ENCODE measurements at regions of chr4 and their contacts with region 1.

Region 1: GRCh38 chr4:21790438-21791029 is 158.0 kb downstream of the KCNIP4 start:
- DNase-seq: peak; percentile 51
- H3K4me3 ChIP-seq: no peak overlapping the region
- H3K27ac ChIP-seq: no peak overlapping the region
- H3K4me1 ChIP-seq: no peaks in the 10 kb centered on the region
- H3K27me3 ChIP-seq: peaks cover 0 to 2% of the 10 kb centered on the region in 2 experiments
- CTCF ChIP-seq: peak; percentile 14 to 26
- POLR2A ChIP-seq: no peak

Region 2: DNA sequence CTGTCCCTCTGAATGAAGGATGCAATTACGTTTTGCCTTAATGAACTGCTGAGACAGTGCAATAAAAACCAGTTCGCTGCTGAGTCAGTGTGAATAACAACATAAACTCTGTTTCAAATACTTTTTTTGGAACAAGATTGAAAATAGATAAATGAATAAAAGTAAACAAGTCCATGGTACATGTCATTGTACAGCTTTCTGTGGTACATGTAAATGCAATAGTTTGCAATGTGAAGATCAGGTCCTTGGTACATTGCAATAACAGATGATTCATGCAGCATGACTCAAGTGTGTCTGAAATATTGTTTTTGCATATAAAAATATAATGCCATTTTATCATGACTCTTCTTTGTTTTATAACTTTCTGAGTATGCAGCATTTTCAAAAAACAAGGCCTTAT is 1283.7 kb before region 1 on chr4:
- CTCF ChIA-PET with region 1: no interaction called
- POLR2A ChIA-PET with region 1: no interaction called
- dilution Hi-C with region 1: no loop called
- intact Hi-C with region 1: no loop called
- DNase-seq: peak; percentile 83
- H3K4me3 ChIP-seq: no peak overlapping the region
- H3K27ac ChIP-seq: peak overlapping the region; percentile 28
- H3K4me1 ChIP-seq: peaks cover 20% of the 10 kb centered on the region
- H3K27me3 ChIP-seq: no peaks in the 10 kb centered on the region
- CTCF ChIP-seq: no peak
- POLR2A ChIP-seq: no peak

Region 3: GRCh38 chr4:21780158-21780557 is 10.4 kb before region 1 on chr4:
- CTCF ChIA-PET with region 1: interaction called, 22 read pairs
- POLR2A ChIA-PET with region 1: no interaction called
- dilution Hi-C with region 1: no loop called
- intact Hi-C with region 1: no loop called
- DNase-seq: no peak
- H3K4me3 ChIP-seq: no peak overlapping the region
- H3K27ac ChIP-seq: no peak overlapping the region
- H3K4me1 ChIP-seq: peaks cover 13% of the 10 kb centered on the region
- H3K27me3 ChIP-seq: peaks cover 2 to 15% of the 10 kb centered on the region in 2 experiments
- CTCF ChIP-seq: no peak
- POLR2A ChIP-seq: no peak

Region 4: GRCh38 chr4:21858971-21859370 is 68.4 kb after region 1 on chr4:
- CTCF ChIA-PET with region 1: interaction called, 10 read pairs
- POLR2A ChIA-PET with region 1: no interaction called
- dilution Hi-C with region 1: no loop called
- intact Hi-C with region 1: no loop called
- DNase-seq: no peak
- H3K4me3 ChIP-seq: no peak overlapping the region
- H3K27ac ChIP-seq: no peak overlapping the region
- H3K4me1 ChIP-seq: no peaks in the 10 kb centered on the region
- H3K27me3 ChIP-seq: no peaks in the 10 kb centered on the region
- CTCF ChIP-seq: no peak
- POLR2A ChIP-seq: no peak

Region 5: DNA sequence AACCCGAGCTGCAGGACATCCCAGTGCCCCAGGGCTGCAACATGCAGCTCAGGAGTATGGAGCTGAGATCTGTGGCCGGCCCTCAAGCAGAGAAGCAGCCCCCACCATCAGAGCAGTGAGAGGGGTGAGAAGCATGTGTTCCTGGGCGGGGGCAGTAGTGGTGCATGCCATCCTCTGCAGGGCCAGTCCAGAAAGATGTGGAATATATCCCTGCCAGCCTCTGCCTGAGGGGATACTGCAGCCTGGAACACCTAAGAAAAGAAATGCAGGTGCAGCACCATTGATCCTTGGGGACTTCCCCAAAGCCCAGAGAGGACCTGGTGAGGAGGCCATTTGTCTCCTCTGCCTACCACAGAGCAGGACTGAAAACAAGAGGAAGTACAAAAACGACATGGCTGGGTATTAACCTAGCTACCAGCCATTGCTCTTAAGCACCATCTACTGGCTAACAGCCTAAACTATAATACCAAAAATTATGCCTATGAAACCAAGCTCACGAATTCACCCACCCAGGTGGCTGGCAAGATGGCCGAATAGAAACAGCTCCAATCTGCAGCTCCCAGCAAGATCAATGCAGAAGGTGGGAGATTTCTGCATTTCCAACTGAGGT is 566.6 kb after region 1 on chr4:
- CTCF ChIA-PET with region 1: interaction called, 113 read pairs
- POLR2A ChIA-PET with region 1: no interaction called
- dilution Hi-C with region 1: no loop called
- intact Hi-C with region 1: loop called (anchors 1 kb)
- DNase-seq: peak; percentile 4
- H3K4me3 ChIP-seq: no peak overlapping the region
- H3K27ac ChIP-seq: no peak overlapping the region
- H3K4me1 ChIP-seq: no peaks in the 10 kb centered on the region
- H3K27me3 ChIP-seq: no peaks in the 10 kb centered on the region
- CTCF ChIP-seq: peak in 1 of 2 donors; percentile 16
- POLR2A ChIP-seq: no peak

Region 6: DNA sequence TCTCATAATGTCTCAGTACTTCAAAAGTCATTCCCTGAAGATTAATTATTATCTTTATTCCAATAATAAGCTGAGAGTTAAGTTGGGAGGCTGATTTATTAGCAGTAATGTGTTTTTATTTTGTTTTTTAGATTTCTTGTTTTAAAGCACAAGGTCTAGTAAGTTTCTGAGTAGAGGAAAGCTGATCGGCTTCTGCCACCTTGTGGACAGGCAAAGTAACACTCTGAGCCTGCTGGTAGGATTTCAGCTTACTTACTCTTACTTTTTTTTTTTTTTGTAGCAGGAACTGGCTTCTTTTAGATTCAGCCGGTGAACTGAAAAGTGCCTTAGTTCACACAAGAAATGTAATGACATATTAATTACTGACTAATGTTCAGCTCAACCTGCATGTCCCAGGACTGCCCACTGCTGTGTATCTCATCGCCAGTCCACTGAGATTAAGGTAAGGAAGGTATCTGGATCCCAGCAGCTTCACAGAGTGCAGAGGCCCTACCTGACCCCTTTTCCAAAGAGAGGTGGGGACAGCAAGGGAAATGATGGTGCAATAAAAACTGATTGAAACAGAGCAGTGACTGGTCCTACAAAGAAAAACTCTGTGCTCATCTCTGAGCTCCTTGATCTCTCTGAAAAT is 598.8 kb after region 1 on chr4:
- CTCF ChIA-PET with region 1: interaction called, 712 read pairs
- POLR2A ChIA-PET with region 1: interaction called, 4 read pairs
- dilution Hi-C with region 1: no loop called
- intact Hi-C with region 1: loop called (anchors 1 kb)
- DNase-seq: peak; percentile 78
- H3K4me3 ChIP-seq: no peak overlapping the region
- H3K27ac ChIP-seq: no peak overlapping the region
- H3K4me1 ChIP-seq: peaks cover 18% of the 10 kb centered on the region
- H3K27me3 ChIP-seq: no peaks in the 10 kb centered on the region
- CTCF ChIP-seq: peak; percentile 71
- POLR2A ChIP-seq: no peak

Region 7: GRCh38 chr4:22607382-22607781 is 816.8 kb after region 1 on chr4:
- CTCF ChIA-PET with region 1: interaction called, 36 read pairs
- POLR2A ChIA-PET with region 1: no interaction called
- dilution Hi-C with region 1: no loop called
- intact Hi-C with region 1: loop called (anchors 2 kb)
- DNase-seq: peak; percentile 29
- H3K4me3 ChIP-seq: no peak overlapping the region
- H3K27ac ChIP-seq: no peak overlapping the region
- H3K4me1 ChIP-seq: no peaks in the 10 kb centered on the region
- H3K27me3 ChIP-seq: no peaks in the 10 kb centered on the region
- CTCF ChIP-seq: peak; percentile 10 to 54
- POLR2A ChIP-seq: no peak

Measured in endothelial cell of umbilical vein (primary cell).